ENCODE measurements at regions of chr12 and their contacts with region 1.

Region 1: DNA sequence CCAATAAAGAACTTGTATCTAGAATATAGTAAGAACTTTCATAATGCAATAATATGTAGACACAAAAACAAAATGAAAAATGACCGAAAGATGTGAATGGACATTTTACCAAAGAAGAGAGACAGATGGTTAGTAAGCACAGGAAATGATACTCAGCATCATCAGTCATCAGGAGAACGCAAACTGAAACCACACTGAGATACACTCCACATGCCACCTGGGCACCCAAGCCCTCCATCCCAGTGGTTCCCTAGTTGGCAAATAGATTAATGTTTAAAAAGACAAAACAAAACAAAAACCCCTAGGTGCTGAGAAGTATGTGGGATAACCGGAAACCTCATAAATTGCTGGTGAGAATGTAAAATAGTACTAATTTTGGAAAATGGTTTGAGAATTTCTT is 26.8 kb upstream of the VPS33A start:
- DNase-seq: no peak
- H3K4me3 ChIP-seq: no peak overlapping the region
- H3K27ac ChIP-seq: no peak overlapping the region
- H3K27me3 ChIP-seq: no peaks in the 10 kb centered on the region
- CTCF ChIP-seq: no peak

Region 2: GRCh38 chr12:120361506-120362208 is 1931.4 kb before region 1 on chr12:
- CTCF ChIA-PET with region 1: no interaction called
- POLR2A ChIA-PET with region 1: interaction called, 10 read pairs
- DNase-seq: peak; percentile 21
- H3K4me3 ChIP-seq: peak overlapping the region; percentile 39; the same call in 1 of the 2 replicates
- H3K27ac ChIP-seq: no peak overlapping the region
- H3K27me3 ChIP-seq: peaks cover 62% of the 10 kb centered on the region
- CTCF ChIP-seq: no peak

Region 3: GRCh38 chr12:122244565-122245371 is 48.3 kb before region 1 on chr12:
- CTCF ChIA-PET with region 1: interaction called, 10 read pairs
- POLR2A ChIA-PET with region 1: no interaction called
- DNase-seq: no peak
- H3K4me3 ChIP-seq: no peak overlapping the region
- H3K27ac ChIP-seq: no peak overlapping the region
- H3K27me3 ChIP-seq: no peaks in the 10 kb centered on the region
- CTCF ChIP-seq: no peak

Region 4: GRCh38 chr12:122265931-122266771 is 26.9 kb before region 1 on chr12 and contains the start of gene VPS33A:
- CTCF ChIA-PET with region 1: no interaction called
- POLR2A ChIA-PET with region 1: no interaction called
- DNase-seq: peak; percentile 99
- H3K4me3 ChIP-seq: peak within 1 kb of the TSS; percentile 93
- H3K27ac ChIP-seq: peak within 1 kb of the TSS; percentile 84
- H3K27me3 ChIP-seq: no peaks in the 10 kb centered on the region
- CTCF ChIP-seq: no peak
- polyA plus RNA-seq, gene VPS33A: 22.7 and 23.5 TPM in 2 replicates

Measured in AG04450 (cell line).